ENCODE measurements at regions of chr18 and their contacts with region 1.

Region 1: GRCh38 chr18:46173393-46174341 is 69.5 kb downstream of the HAUS1 start:
- DNase-seq: peak; percentile 95
- H3K4me3 ChIP-seq: peak overlapping the region; percentile 77 to 98
- H3K27ac ChIP-seq: peak overlapping the region; percentile 85 to 92
- H3K4me1 ChIP-seq: peaks cover 7 to 14% of the 10 kb centered on the region in 2 experiments; a peak in 2 of 4 replicates
- H3K27me3 ChIP-seq: no peaks in the 10 kb centered on the region
- CTCF ChIP-seq: peak; percentile 91
- EP300 ChIP-seq: peak; percentile 22 to 43; a peak in 2 of 4 replicates
- RAD21 ChIP-seq: peak; percentile 77

Region 2: GRCh38 chr18:46073474-46074331 is 100.0 kb before region 1 on chr18:
- CTCF ChIA-PET with region 1: no interaction called
- POLR2A ChIA-PET with region 1: no interaction called
- DNase-seq: peak; percentile 57
- H3K4me3 ChIP-seq: no peak overlapping the region
- H3K27ac ChIP-seq: no peak overlapping the region
- H3K4me1 ChIP-seq: peaks cover 0 to 9% of the 10 kb centered on the region in 2 experiments; a peak in 1 of 4 replicates
- H3K27me3 ChIP-seq: no peaks in the 10 kb centered on the region
- CTCF ChIP-seq: peak; percentile 73
- EP300 ChIP-seq: no peak
- RAD21 ChIP-seq: peak; percentile 88

Region 3: GRCh38 chr18:46097801-46098615 is 75.7 kb before region 1 on chr18 and contains the start of gene ATP5F1A:
- CTCF ChIA-PET with region 1: interaction called, 12 read pairs
- POLR2A ChIA-PET with region 1: no interaction called
- DNase-seq: peak; percentile 92
- H3K4me3 ChIP-seq: peak within 1 kb of the TSS; percentile 68 to 91
- H3K27ac ChIP-seq: peak within 1 kb of the TSS; percentile 85 to 88
- H3K4me1 ChIP-seq: peaks cover 5 to 11% of the 10 kb centered on the region in 2 experiments; a peak in 2 of 4 replicates
- H3K27me3 ChIP-seq: no peaks in the 10 kb centered on the region
- CTCF ChIP-seq: peak; percentile 28; the same call in 1 of the 2 replicates
- EP300 ChIP-seq: no peak
- RAD21 ChIP-seq: no peak
- polyA plus RNA-seq, gene ATP5F1A: 610 and 676 TPM in 2 replicates

Region 4: DNA sequence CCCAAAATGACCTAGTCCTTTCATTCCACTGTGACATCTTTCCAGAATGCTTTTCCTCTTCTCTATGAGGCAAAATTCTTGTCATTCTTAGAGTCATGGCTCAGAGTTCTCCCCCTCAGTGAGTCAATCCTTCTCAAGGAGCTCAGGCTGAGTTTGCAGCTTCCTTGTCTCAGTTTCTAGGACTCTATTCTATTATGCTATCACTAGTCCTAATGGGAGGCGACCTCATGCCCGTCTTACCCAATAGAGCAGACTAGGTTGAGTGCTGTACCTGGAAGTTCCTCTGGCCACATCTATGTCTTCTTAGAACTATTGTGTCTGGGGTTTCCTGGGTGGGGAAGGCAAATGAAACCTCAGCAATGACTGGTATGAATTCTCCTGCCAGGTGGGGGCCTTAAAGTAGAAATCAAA is 18.0 kb before region 1 on chr18:
- CTCF ChIA-PET with region 1: interaction called, 76 read pairs
- POLR2A ChIA-PET with region 1: interaction called, 3 read pairs
- DNase-seq: no peak
- H3K4me3 ChIP-seq: no peak overlapping the region
- H3K27ac ChIP-seq: peak overlapping the region in 1 of 2 experiments; percentile 62; a peak in 2 of 4 replicates
- H3K4me1 ChIP-seq: peaks cover 13 to 18% of the 10 kb centered on the region in 2 experiments; a peak in 2 of 4 replicates
- H3K27me3 ChIP-seq: no peaks in the 10 kb centered on the region
- CTCF ChIP-seq: no peak
- EP300 ChIP-seq: peak in 1 of 2 experiments; percentile 71; a peak in 1 of 4 replicates
- RAD21 ChIP-seq: no peak

Region 5: GRCh38 chr18:46199515-46200147 is 26.0 kb after region 1 on chr18:
- CTCF ChIA-PET with region 1: interaction called, 24 read pairs
- POLR2A ChIA-PET with region 1: no interaction called
- DNase-seq: no peak
- H3K4me3 ChIP-seq: no peak overlapping the region
- H3K27ac ChIP-seq: no peak overlapping the region
- H3K4me1 ChIP-seq: peaks cover 0 to 4% of the 10 kb centered on the region in 2 experiments; a peak in 1 of 4 replicates
- H3K27me3 ChIP-seq: no peaks in the 10 kb centered on the region
- CTCF ChIP-seq: no peak
- EP300 ChIP-seq: no peak
- RAD21 ChIP-seq: no peak

Region 6: GRCh38 chr18:46220116-46220515 is 46.4 kb after region 1 on chr18:
- CTCF ChIA-PET with region 1: interaction called, 26 read pairs
- POLR2A ChIA-PET with region 1: no interaction called
- DNase-seq: no peak
- H3K4me3 ChIP-seq: no peak overlapping the region
- H3K27ac ChIP-seq: peak overlapping the region in 1 of 2 experiments; percentile 66; a peak in 2 of 4 replicates
- H3K4me1 ChIP-seq: peaks cover 6 to 19% of the 10 kb centered on the region in 2 experiments; a peak in 3 of 4 replicates
- H3K27me3 ChIP-seq: no peaks in the 10 kb centered on the region
- CTCF ChIP-seq: no peak
- EP300 ChIP-seq: no peak
- RAD21 ChIP-seq: no peak

Region 7: DNA sequence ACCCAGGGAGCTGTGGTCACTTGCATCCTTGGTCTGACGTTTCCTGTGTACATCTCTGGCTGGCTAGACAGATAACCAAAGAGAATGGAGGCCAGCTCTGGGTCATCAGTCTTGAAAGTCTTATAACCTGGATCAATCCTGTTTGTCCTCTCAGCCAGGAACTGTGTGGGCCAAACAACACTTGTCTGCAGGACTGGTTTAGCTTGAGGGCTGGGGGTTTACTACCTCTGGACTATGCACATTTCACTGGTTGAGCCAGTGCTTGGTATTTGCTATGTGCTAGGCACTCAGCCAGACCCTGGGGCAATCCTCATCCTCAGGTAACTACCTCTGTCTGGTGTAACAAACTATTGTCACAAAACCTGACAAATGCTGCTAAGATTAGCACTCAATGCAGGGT is 100.2 kb after region 1 on chr18:
- CTCF ChIA-PET with region 1: interaction called, 52 read pairs
- POLR2A ChIA-PET with region 1: no interaction called
- DNase-seq: no peak
- H3K4me3 ChIP-seq: no peak overlapping the region
- H3K27ac ChIP-seq: no peak overlapping the region
- H3K4me1 ChIP-seq: peaks cover 9 to 10% of the 10 kb centered on the region in 2 experiments; a peak in 1 of 4 replicates
- H3K27me3 ChIP-seq: no peaks in the 10 kb centered on the region
- CTCF ChIP-seq: no peak
- EP300 ChIP-seq: no peak
- RAD21 ChIP-seq: no peak

Region 8: DNA sequence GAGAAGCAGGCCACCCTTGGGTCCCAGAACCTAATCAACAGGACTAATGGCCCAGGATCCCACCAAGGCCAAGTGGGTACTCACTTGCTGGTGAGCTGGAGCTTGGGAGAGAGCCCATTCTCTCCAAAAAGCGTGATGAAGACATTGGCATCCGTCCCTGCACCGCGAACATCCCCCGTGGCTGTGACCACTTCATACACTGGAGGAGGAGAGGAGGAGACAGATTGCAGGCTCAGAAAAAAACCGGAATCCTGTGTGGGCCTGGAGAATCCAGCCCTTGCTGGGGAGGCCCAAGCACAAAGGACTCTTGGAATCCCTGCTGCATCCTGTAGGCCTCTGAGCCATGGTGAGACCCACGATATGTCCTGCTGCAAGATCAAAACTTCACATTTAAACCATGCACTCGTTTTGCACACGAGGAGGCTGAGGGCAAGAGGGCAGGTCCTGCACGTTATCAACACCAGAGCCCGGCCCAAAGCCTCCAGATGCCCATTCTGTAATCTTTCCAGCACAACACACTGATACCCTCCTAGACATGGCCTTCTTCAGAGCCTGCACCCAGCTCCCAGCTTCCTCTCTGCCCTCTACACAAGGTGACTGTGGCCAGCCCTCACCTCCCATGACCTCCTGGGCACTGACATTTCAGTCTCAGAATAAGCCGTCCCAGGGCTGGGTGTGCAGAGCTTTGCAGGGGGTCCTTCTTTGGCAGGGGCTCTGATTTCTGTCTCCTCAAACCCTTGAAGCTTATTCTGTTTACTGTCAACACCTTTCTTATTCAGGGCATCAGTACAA is 475.6 kb after region 1 on chr18:
- CTCF ChIA-PET with region 1: interaction called, 155 read pairs
- POLR2A ChIA-PET with region 1: no interaction called
- DNase-seq: no peak
- H3K4me3 ChIP-seq: no peak overlapping the region
- H3K27ac ChIP-seq: no peak overlapping the region
- H3K4me1 ChIP-seq: no peaks in the 10 kb centered on the region
- H3K27me3 ChIP-seq: peaks cover 18% of the 10 kb centered on the region; the same call in 1 of the 2 replicates
- CTCF ChIP-seq: no peak
- EP300 ChIP-seq: no peak
- RAD21 ChIP-seq: no peak